Posterior vena cava (tissue), 2 donors: ENCODE measurements at regions of chr16 and their contacts with region 1.

Region 1: GRCh38 chr16:19886073-19886941 is 1.7 kb upstream of the GPRC5B start:
- DNase-seq: peak; percentile 92

Region 2: GRCh38 chr16:19595043-19595767 is 291.1 kb before region 1 on chr16:
- intact Hi-C with region 1: loop called (anchors 2 to 10 kb)
- DNase-seq: no peak

Region 3: DNA sequence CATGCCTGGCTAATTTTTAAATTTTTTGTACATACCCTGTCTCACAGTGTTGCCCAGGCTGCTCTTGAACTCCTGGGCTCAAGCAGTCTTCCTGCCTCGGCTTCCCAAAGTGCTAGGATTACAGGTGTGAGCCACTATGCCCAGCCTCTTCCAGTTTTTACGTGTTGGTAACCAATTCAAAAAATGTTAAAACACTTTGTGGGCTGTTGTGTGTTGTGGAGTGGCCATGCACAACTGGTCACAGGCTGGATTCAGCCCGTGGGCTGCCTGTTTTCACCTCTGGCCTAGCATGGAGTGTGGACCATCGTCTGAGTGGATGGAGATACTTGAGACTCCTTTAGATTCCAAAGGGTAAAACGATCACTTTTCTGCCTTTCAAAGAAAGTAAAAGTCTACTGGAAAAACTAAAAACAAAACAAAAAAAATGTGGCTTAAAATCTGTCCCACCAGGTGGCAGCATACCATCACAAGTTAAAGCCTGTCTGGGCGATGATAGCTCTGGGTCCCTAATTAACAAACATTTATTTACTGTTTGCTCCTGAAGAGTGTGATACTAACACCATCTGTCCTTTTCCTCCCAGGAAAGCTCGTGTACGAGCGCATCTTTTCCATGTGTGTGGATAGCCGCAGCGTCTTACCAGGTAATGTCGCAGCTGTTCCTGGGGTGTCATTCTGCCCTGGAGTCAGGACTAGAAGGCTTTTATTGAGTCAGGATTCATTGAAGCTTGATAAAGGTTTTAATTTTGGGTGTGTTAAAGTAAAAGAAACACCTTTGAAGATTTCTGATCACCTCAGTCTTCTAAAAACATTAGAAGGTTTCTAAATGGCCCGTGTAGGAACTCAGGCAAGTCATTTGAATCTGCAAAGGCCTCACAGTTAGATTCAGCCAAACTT is 285.0 kb before region 1 on chr16:
- intact Hi-C with region 1: loop called (anchors 2 to 10 kb)
- DNase-seq: no peak

Region 4: DNA sequence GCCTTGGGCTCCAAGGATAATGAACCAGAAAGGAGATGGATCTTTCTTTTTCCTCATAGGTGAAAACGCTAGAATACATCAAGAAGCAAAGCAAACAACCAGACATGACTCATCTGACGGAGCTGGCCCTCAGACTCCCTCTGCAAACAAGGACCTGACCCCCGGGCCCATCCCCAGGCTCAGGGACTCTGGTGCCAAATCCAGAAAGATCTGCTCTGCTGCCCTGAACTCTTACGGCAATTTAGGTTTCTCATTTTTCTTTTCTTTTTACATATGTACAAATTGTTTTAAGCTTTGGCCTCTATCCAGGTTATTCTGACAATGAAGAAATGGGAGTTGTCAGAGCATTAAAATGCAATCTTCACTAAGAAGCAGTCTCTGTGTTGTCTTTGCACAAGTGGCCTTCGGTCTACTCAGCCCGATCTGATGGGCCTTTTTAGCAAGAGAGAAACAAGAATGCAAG is 186.0 kb before region 1 on chr16:
- intact Hi-C with region 1: loop called in 1 of 2 experiments (anchors 10 kb)
- DNase-seq: no peak

Region 5: GRCh38 chr16:19717771-19718602 is 168.3 kb before region 1 on chr16 and contains the starts of genes IQCK and KNOP1:
- intact Hi-C with region 1: loop called in 1 of 2 experiments (anchors 2 kb)
- DNase-seq: peak; percentile 97
- total RNA-seq, gene IQCK: 7.9 to 9.5 TPM
- total RNA-seq, gene KNOP1: 9.5 to 11.0 TPM

Region 6: DNA sequence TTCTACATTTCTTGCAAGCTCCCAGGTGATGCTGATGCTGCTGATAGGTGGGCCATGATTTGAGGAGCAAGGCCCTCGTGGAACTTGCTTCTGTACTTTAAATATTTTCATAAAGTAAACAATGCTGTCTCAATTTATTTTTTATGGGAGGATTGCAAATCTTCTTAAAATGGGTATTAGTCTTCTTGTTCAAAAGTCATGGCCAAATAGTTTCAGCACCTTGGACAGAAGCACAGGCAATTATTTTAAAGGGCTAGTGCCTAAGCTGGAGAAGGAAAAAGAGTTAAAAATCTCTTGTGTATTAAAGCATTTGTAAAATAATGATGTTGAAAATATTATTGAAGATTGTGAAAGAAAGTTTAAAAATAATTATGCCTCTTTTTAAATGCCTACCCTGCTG is 136.9 kb after region 1 on chr16:
- intact Hi-C with region 1: no loop called
- DNase-seq: no peak